Naive thymus-derived CD4-positive, alpha-beta T cell (primary cell): ENCODE measurements at regions of chr12 and their contacts with region 1.

Region 1: DNA sequence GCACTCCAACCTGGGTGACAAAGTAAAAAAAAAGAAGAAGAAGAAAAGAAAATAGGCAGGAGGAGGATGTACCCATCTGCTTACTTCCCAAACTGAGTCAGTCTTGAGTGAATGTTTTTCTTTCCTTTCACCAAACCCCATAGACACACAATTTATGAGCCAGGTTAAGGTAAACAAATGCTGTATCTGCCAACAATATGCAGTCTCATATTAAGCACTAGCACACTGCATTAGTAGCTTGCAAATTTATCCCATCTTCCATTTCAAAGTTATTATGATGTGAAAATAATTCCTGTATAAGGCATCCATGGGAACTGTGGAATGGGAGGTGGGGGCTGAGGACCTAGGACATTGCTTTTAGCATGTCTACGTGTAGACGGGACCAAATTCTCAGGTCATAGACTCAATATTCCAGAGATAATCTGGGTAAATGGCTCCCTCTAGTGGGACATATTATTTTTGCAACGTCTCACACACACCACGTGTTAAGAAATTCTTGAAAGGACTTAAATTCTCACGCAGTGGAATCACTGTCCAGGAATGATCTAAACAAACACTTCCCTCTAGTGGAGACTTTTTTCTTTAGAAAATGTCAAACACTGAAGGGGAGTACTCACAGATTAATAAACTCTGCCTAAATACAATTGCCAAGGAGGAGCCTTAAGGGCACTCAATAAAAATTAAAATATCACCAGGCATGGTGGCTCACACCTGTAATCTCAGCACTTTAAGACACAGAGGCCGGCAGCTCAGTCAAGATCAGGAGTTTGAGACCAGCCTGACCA is 17.1 kb upstream of the OR10P1 start:
- DNase-seq: peak in 7 of 9 donors; percentile 49 to 74 (median 69)
- ATAC-seq: peak; percentile 95
- H3K4me3 ChIP-seq: no peak overlapping the region
- H3K4me3 Mint-ChIP-seq: no peak overlapping the region
- H3K27ac ChIP-seq: no peak overlapping the region
- H3K27ac Mint-ChIP-seq: no peak overlapping the region
- H3K4me1 ChIP-seq: no peaks in the 10 kb centered on the region
- H3K4me1 Mint-ChIP-seq: peaks cover 0 to 6% (median 0%) of the 10 kb centered on the region in 7 donors
- H3K27me3 ChIP-seq: no peaks in the 10 kb centered on the region
- H3K27me3 Mint-ChIP-seq: peaks cover 19 to 46% (median 36%) of the 10 kb centered on the region in 5 donors

Region 2: GRCh38 chr12:55188974-55189556 is 430.5 kb before region 1 on chr12:
- CTCF ChIA-PET with region 1: interaction called, 7 read pairs
- POLR2A ChIA-PET with region 1: no interaction called
- intact Hi-C with region 1: loop called (anchors 1 kb)
- DNase-seq: peak in 7 of 9 donors; percentile 29 to 66 (median 56)
- ATAC-seq: peak; percentile 79
- H3K4me3 ChIP-seq: no peak overlapping the region
- H3K4me3 Mint-ChIP-seq: no peak overlapping the region
- H3K27ac ChIP-seq: no peak overlapping the region
- H3K27ac Mint-ChIP-seq: no peak overlapping the region
- H3K4me1 ChIP-seq: no peaks in the 10 kb centered on the region
- H3K4me1 Mint-ChIP-seq: no peaks in the 10 kb centered on the region
- H3K27me3 ChIP-seq: no peaks in the 10 kb centered on the region
- H3K27me3 Mint-ChIP-seq: peaks cover 19 to 63% (median 46%) of the 10 kb centered on the region in 5 donors